ENCODE measurements at regions of chr2 and their contacts with region 1.

Region 1: GRCh38 chr2:15939854-15940660 is at the start of gene MYCN:
- DNase-seq: no peak
- ATAC-seq: peak; percentile 29 to 38
- total RNA-seq, gene MYCN: 0.53 to 0.73 TPM

Region 2: GRCh38 chr2:15388406-15389330 is 551.4 kb before region 1 on chr2:
- intact Hi-C with region 1: no loop called
- DNase-seq: no peak
- ATAC-seq: peak in 1 of 2 donors; percentile 41

Region 3: DNA sequence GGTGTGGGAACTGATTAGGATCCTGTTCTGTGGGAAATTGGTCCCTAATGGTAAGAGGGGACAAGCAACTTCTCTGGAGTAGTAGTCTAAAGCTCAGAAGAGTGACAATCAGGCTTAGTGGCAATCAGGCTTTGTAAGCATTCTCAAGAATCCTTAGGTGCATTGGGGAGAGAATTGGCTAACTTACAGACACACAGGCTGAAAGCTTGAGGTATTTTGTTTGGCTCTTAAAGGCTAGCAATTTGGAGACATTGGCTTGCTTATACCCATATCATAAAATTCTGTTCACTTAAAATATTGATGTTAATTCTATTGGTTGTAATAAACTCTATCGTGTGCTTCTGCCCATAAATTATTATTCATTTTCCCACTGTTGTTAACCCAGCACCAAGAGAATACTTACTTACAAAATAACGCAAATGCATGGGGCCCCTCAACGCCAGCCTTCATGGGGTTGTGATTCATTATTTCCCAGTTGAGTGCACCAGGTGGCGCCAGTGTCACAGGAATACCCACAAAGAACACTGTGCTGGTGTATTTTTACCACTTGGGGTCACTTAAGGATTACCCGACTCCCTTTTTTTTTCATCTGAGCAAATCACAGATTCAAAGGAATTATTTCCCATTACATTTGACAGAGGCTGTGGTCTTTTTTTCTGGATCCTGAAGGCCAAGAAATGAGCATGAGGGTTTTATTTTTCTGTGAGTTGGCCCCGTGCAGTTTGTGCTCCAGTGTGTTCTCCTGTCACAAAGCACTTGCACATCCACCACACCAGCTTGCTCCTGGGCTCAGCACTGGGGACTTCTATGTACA is 302.9 kb before region 1 on chr2:
- intact Hi-C with region 1: loop called in 1 of 2 experiments (anchors 10 kb)
- DNase-seq: peak; percentile 77
- ATAC-seq: peak; percentile 80 to 85

Region 4: DNA sequence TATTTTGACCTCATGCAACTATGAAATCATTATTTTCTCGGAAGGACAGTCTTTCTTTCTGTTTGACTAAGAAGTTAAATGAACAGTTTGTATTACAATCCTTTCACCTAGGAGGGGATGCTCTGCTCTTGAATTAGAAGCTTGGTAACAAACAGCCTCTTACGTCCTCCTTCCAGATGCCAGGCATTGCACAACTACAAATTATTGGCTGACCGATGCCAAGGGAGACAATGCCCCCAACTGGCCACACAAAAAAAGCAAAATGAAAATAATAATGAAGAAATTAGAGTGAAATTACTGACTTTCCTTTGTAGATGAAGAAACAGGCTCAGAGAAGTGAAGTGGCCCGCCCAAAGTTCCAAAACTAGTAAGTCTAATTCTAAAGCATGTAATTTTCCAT is 547.6 kb after region 1 on chr2:
- intact Hi-C with region 1: loop called (anchors 5 to 10 kb)
- DNase-seq: peak; percentile 31
- ATAC-seq: peak; percentile 41 to 64

Region 5: GRCh38 chr2:16507655-16508489 is 567.8 kb after region 1 on chr2:
- intact Hi-C with region 1: loop called in 1 of 2 experiments (anchors 5 kb)
- DNase-seq: peak; percentile 51
- ATAC-seq: peak; percentile 94

Region 6: DNA sequence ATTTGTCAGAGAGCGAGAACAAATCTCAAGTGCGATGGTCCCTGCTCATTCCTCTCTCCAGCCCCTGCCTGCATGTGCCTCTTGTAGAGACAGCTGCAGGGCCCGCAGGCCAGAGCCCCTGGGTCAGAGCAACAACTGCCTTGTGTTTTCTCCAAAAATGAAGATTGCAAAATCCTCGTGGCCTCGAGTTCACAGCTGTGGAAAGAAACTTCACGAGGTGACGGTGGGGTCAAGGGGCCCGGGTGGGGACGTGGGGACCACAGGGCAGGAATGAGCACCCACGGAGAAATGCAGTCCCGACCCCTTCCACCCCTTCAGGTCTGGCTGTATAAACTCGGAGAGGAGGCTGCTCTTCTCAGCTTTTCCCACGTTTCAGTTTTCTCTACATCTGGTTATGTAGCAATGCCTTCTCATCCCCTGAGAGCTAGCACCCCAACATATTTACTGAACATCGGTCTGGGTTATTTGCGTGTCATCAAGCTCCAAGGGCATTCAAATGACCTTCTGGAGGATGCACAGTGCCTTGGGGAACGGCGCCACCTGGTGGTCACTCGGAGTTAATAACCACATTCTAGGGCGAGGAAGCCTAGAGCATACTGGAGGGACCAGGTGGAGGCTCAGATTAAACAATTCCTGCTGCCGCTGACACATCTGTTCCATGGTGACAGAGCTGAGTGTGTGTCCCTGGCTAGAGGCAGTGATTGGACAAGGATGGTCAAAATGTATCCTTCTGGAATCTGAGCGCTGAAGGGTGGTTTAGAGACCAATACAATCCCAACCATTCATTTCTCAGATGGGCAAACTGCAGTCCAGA is 817.0 kb after region 1 on chr2:
- intact Hi-C with region 1: loop called in 1 of 2 experiments (anchors 10 kb)
- DNase-seq: peak; percentile 80
- ATAC-seq: peak; percentile 92 to 93

Measured in left cardiac atrium (tissue), 4 donors.